Heart right ventricle (tissue), 16 donors: ENCODE measurements at regions of chr17 and their contacts with region 1.

Region 1: GRCh38 chr17:11511696-11512095 is 86.6 kb upstream of the DNAH9 start:
- DNase-seq: no peak
- ATAC-seq: no peak
- H3K4me3 ChIP-seq: no peak overlapping the region
- H3K27ac ChIP-seq: no peak overlapping the region
- H3K4me1 ChIP-seq: no peaks in the 10 kb centered on the region
- H3K27me3 ChIP-seq: peaks cover 0 to 23% (median 0%) of the 10 kb centered on the region in 7 donors
- CTCF ChIP-seq: no peak

Region 2: GRCh38 chr17:11086646-11087340 is 424.9 kb before region 1 on chr17:
- intact Hi-C with region 1: no loop called
- DNase-seq: no peak
- ATAC-seq: no peak
- H3K4me3 ChIP-seq: no peak overlapping the region
- H3K27ac ChIP-seq: no peak overlapping the region
- H3K4me1 ChIP-seq: no peaks in the 10 kb centered on the region
- H3K27me3 ChIP-seq: peaks cover 0 to 15% (median 0%) of the 10 kb centered on the region in 7 donors
- CTCF ChIP-seq: no peak

Region 3: DNA sequence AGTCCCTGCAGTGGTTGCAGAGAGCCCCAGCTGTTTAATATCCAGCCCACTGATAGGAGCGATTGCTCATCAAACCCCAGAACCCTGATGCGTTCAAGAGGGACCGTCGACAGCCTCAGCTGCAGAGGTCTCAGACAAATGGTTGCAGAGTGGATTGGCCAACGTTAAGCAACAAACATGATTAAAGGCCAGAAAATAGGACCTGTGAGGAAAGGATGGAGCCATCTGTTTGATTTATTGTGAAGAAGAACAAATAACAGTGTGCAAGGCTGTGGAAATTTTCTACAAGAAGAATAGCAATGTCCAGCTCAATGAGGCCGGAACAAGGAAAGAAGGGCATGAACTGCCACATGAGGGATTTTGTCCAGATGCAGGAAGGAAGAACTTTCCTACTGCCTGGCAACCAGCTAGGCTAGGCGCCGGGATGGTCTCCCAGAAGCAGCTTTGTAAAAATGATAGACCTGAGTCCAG is 51.8 kb before region 1 on chr17:
- intact Hi-C with region 1: loop called in 1 of 10 experiments (anchors 10 kb)
- DNase-seq: no peak
- ATAC-seq: peak in 3 of 8 donors; percentile 25 to 48 (median 39)
- H3K4me3 ChIP-seq: no peak overlapping the region
- H3K27ac ChIP-seq: no peak overlapping the region
- H3K4me1 ChIP-seq: no peaks in the 10 kb centered on the region
- H3K27me3 ChIP-seq: peaks cover 0 to 16% (median 7%) of the 10 kb centered on the region in 7 donors
- CTCF ChIP-seq: no peak